ENCODE measurements at regions of chr6 and their contacts with region 1.

Region 1: GRCh38 chr6:56292505-56293181 is 45.3 kb upstream of the COL21A1 start:
- DNase-seq: no peak
- ATAC-seq: peak; percentile 70
- H3K4me3 ChIP-seq: no peak overlapping the region
- H3K27ac ChIP-seq: no peak overlapping the region
- H3K4me1 ChIP-seq: no peaks in the 10 kb centered on the region
- H3K27me3 ChIP-seq: no peaks in the 10 kb centered on the region; a peak in 1 of 4 replicates
- CTCF ChIP-seq: peak; percentile 17 to 52 (median 27); a peak in 4 of 6 replicates
- EP300 ChIP-seq: no peak
- POLR2A ChIP-seq: no peak
- RAD21 ChIP-seq: peak; percentile 79

Region 2: DNA sequence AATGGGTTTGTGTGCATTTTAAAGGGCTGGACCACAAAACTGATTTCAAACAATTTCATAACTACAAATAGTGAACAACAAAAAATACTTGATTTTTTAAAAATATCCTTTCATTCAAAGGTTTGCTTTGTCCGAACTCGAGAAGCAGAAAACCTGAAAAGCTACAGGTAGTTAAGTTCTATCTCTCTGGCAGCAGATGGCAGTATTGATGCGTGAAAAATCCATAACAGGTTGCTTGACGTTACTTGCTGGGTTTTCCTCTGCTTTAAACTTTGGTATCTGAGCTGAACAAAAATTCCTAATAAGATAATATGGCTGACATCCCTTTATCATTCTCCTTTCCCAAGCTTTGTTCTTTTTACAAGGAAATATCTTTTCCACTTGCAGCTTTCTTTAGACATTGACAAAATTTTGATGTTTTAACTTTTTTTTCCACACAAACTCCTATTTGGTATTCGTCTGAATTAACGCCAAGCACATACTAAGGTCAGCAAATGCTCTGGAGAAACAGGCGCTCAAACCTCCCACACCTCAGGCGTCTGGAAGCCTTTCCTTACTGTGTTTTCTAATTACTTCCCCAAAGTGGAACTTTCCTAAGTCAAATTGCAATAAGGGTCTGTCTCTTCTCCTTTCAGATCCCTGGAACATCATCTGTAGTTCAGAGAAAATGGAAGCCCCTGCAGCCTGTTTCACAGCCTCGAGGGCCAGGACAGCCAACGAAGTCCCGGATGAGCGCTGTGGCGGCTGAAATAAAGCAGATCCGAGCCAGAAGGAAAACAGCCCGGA is 1015.7 kb before region 1 on chr6:
- CTCF ChIA-PET with region 1: interaction called, 8 read pairs
- POLR2A ChIA-PET with region 1: no interaction called
- RAD21 ChIA-PET with region 1: interaction called, 7 read pairs
- SMC1A ChIA-PET with region 1: interaction called, 3 read pairs
- in situ Hi-C with region 1: no loop called
- intact Hi-C with region 1: loop called (anchors 10 kb)
- DNase-seq: no peak
- ATAC-seq: peak; percentile 64
- H3K4me3 ChIP-seq: no peak overlapping the region
- H3K27ac ChIP-seq: no peak overlapping the region
- H3K4me1 ChIP-seq: no peaks in the 10 kb centered on the region
- H3K27me3 ChIP-seq: no peaks in the 10 kb centered on the region
- CTCF ChIP-seq: peak; percentile 51 to 61 (median 56); a peak in 5 of 6 replicates
- EP300 ChIP-seq: no peak
- POLR2A ChIP-seq: no peak
- RAD21 ChIP-seq: peak; percentile 66

Region 3: GRCh38 chr6:55445648-55446204 is 846.9 kb before region 1 on chr6:
- CTCF ChIA-PET with region 1: interaction called, 6 read pairs
- POLR2A ChIA-PET with region 1: no interaction called
- RAD21 ChIA-PET with region 1: interaction called, 3 read pairs
- SMC1A ChIA-PET with region 1: interaction called, 3 read pairs
- in situ Hi-C with region 1: no loop called
- intact Hi-C with region 1: loop called (anchors 5 kb)
- DNase-seq: peak; percentile 4
- ATAC-seq: peak; percentile 32; the same call in 1 of the 3 replicates
- H3K4me3 ChIP-seq: no peak overlapping the region
- H3K27ac ChIP-seq: no peak overlapping the region
- H3K4me1 ChIP-seq: no peaks in the 10 kb centered on the region
- H3K27me3 ChIP-seq: no peaks in the 10 kb centered on the region
- CTCF ChIP-seq: peak; percentile 28 to 47 (median 47); a peak in 5 of 6 replicates
- EP300 ChIP-seq: no peak
- POLR2A ChIP-seq: no peak
- RAD21 ChIP-seq: peak; percentile 62

Region 4: DNA sequence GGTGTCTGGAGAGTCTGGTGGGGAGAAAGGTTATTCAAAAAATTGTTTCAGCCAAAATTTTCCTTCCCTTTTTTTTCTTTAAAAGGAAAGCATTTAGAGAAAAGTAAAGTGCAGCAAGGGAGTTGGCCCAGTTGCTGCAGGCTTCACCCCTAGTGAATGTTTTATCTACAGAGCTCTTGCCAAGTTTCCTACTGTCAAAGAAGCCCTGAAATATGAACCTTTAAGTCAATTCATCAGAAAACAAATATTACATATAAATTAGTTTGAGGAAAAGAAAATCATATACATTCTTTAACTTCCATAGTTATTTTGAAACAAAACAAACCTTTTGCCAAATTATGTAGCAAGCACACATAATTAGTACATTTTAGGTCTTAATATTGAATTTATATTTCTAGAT is 688.6 kb before region 1 on chr6:
- CTCF ChIA-PET with region 1: no interaction called
- POLR2A ChIA-PET with region 1: no interaction called
- RAD21 ChIA-PET with region 1: no interaction called
- SMC1A ChIA-PET with region 1: no interaction called
- in situ Hi-C with region 1: no loop called
- intact Hi-C with region 1: loop called (anchors 10 kb)
- DNase-seq: no peak
- ATAC-seq: no peak
- H3K4me3 ChIP-seq: no peak overlapping the region
- H3K27ac ChIP-seq: no peak overlapping the region
- H3K4me1 ChIP-seq: no peaks in the 10 kb centered on the region
- H3K27me3 ChIP-seq: no peaks in the 10 kb centered on the region
- CTCF ChIP-seq: no peak
- EP300 ChIP-seq: no peak
- POLR2A ChIP-seq: no peak
- RAD21 ChIP-seq: no peak

Region 5: GRCh38 chr6:55980627-55981211 is 311.9 kb before region 1 on chr6:
- CTCF ChIA-PET with region 1: interaction called, 3 read pairs
- POLR2A ChIA-PET with region 1: no interaction called
- RAD21 ChIA-PET with region 1: no interaction called
- SMC1A ChIA-PET with region 1: no interaction called
- in situ Hi-C with region 1: no loop called
- intact Hi-C with region 1: loop called (anchors 1 kb)
- DNase-seq: no peak
- ATAC-seq: no peak
- H3K4me3 ChIP-seq: no peak overlapping the region
- H3K27ac ChIP-seq: no peak overlapping the region
- H3K4me1 ChIP-seq: no peaks in the 10 kb centered on the region
- H3K27me3 ChIP-seq: no peaks in the 10 kb centered on the region
- CTCF ChIP-seq: peak; percentile 32 to 42 (median 35); a peak in 4 of 6 replicates
- EP300 ChIP-seq: no peak
- POLR2A ChIP-seq: no peak
- RAD21 ChIP-seq: peak; percentile 62